GM12878 (cell line): ENCODE measurements at regions of chr3 and their contacts with region 1.

Region 1: DNA sequence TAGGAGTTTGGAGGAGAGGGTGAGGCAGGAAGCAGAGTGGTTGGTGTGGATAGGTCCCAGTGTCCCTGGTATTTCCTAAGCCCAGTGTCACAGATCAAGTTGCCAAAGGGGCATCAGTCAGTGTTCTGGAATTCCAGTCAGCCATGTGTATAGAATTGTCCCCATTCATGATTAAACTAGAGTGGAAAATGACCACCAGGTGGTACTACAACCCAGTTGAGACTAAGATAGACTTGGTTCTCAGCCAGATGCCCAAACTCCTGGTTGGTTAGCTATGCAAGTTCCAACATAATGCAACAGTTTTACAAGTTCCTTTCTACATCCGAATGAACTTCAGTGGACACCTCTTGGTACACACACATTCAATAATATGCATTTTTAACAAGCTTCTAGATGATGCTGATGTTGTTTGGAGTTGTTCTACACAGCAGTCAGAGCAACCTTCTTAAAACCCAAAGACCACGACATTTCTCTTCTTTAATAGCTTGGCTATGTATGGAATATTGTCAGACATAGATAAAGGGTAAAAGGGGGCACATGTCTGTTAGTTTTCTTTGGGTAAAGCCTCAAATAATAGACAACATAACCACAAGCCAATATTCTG is 8.4 kb upstream of the ATR start:
- DNase-seq: no peak
- ATAC-seq: peak; percentile 88
- H3K4me3 ChIP-seq: no peak overlapping the region
- H3K27ac ChIP-seq: no peak overlapping the region
- H3K4me1 ChIP-seq: no peaks in the 10 kb centered on the region
- H3K27me3 ChIP-seq: no peaks in the 10 kb centered on the region
- CTCF ChIP-seq: peak; percentile 49 to 68 (median 50); a peak in 4 of 6 replicates
- EP300 ChIP-seq: no peak
- POLR2A ChIP-seq: no peak
- RAD21 ChIP-seq: peak; percentile 59

Region 2: DNA sequence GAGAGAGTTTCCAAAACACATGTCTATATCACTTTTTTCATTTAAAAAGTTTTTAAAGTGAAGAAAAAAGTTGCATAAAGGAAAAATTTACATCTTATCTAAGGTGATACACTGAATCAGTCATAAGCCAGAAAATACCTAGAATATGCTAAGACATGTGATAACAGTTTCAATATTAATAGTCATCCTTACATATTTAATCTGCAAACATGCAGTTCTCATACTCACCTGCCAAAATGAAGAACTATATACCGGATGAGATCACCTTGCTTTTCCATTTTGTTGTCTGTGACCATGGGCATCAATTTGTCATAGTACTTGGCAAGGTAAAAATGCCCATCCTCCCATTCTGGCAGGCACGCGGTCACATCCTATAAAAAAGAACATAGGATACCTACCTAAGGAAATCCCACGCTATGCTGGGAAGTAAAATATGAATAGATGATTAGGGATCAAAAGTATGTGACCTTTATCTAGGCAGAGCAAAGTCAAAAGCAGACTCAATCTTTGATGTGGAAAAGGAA is 101.9 kb before region 1 on chr3:
- CTCF ChIA-PET with region 1: no interaction called
- POLR2A ChIA-PET with region 1: no interaction called
- RAD21 ChIA-PET with region 1: no interaction called
- SMC1A ChIA-PET with region 1: no interaction called
- in situ Hi-C with region 1: no loop called
- intact Hi-C with region 1: no loop called
- DNase-seq: no peak
- ATAC-seq: no peak
- H3K4me3 ChIP-seq: no peak overlapping the region
- H3K27ac ChIP-seq: no peak overlapping the region
- H3K4me1 ChIP-seq: no peaks in the 10 kb centered on the region
- H3K27me3 ChIP-seq: no peaks in the 10 kb centered on the region
- CTCF ChIP-seq: no peak
- EP300 ChIP-seq: no peak
- POLR2A ChIP-seq: no peak
- RAD21 ChIP-seq: no peak

Region 3: DNA sequence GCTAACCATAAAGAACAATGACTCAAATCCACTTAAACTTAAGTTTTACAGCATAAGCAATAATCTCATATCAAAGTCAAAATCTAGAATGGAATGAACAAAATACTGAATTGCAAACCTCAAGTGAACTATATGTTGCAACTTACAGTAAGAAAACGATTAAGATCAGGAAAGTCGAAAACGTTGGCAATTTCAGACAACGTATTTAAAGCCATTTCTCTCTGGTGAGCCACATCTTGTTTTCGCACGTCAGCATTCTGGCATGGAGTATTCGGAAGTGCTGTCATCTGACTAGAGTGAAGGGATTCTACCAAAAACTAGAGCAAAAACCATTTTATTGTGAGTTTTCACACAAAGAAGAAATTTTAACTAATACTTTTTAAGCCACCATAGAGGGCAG is 36.9 kb before region 1 on chr3:
- CTCF ChIA-PET with region 1: no interaction called
- POLR2A ChIA-PET with region 1: no interaction called
- RAD21 ChIA-PET with region 1: no interaction called
- SMC1A ChIA-PET with region 1: no interaction called
- in situ Hi-C with region 1: no loop called
- intact Hi-C with region 1: no loop called
- DNase-seq: no peak
- ATAC-seq: no peak
- H3K4me3 ChIP-seq: no peak overlapping the region
- H3K27ac ChIP-seq: no peak overlapping the region
- H3K4me1 ChIP-seq: no peaks in the 10 kb centered on the region
- H3K27me3 ChIP-seq: no peaks in the 10 kb centered on the region
- CTCF ChIP-seq: no peak
- EP300 ChIP-seq: no peak
- POLR2A ChIP-seq: no peak
- RAD21 ChIP-seq: no peak

Region 4: DNA sequence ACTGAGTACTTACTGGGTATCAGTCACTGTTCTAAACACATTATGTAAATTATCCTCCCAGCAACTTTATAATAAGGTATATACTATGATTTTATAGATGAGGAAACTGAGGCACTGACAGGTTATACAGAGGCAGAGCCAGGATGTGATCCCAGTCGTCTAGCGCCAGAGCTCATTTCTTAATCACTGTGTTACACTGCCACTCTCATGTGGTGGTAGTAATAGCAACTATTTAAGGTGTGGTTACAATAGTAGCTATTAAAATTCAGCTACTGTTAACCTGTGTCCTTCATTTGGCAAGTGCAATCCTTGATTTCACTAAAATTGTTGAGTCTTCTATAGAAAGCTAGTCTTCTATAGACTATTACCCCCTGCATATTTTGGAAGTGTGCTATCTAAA is 93.8 kb after region 1 on chr3:
- CTCF ChIA-PET with region 1: no interaction called
- POLR2A ChIA-PET with region 1: no interaction called
- RAD21 ChIA-PET with region 1: interaction called, 3 read pairs
- SMC1A ChIA-PET with region 1: interaction called, 5 read pairs
- in situ Hi-C with region 1: no loop called
- intact Hi-C with region 1: loop called (anchors 5 kb)
- DNase-seq: no peak
- ATAC-seq: no peak
- H3K4me3 ChIP-seq: no peak overlapping the region
- H3K27ac ChIP-seq: no peak overlapping the region
- H3K4me1 ChIP-seq: no peaks in the 10 kb centered on the region
- H3K27me3 ChIP-seq: no peaks in the 10 kb centered on the region
- CTCF ChIP-seq: no peak; a peak in 1 of 6 replicates
- EP300 ChIP-seq: no peak
- POLR2A ChIP-seq: no peak
- RAD21 ChIP-seq: no peak

Region 5: DNA sequence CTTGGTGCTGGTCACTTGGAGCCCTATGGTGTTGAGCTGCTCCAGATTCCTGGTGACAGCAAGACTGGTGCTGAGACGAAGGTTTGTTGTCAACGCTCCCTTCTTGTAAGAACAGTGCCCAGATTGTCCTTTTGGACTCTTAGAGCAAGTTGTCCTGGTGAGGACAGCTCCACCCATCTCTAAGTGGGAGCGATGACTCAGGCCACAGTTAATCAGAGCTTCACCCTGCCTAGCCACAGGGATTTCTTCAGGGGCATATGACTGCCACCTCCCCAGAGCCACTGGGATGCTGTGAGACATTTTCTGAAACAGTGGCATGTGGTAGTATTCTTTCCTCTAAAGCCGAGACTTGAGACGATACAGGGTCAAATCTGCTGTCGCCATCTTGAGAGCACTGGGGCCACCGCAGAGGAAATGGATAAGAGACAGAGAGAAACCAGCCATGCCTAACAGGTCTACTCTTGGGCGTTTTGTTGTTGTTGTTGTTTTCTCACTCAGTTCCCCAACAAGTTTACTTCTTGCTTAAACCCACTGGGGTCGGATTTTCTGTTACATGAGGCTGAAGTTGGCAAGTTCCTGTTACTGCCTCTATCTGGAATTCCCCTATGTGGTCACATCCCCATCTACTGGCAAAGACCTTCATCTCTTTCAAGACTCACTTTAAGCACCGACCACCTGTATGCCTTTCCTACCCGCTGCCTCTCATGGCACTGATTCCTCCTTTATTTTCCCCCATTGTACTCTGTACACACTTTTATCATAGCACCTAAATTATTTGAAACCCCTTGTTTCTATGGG is 317.9 kb after region 1 on chr3:
- CTCF ChIA-PET with region 1: no interaction called
- POLR2A ChIA-PET with region 1: no interaction called
- RAD21 ChIA-PET with region 1: no interaction called
- SMC1A ChIA-PET with region 1: interaction called, 3 read pairs
- in situ Hi-C with region 1: no loop called
- intact Hi-C with region 1: loop called (anchors 10 kb)
- DNase-seq: no peak
- ATAC-seq: peak; percentile 79
- H3K4me3 ChIP-seq: no peak overlapping the region
- H3K27ac ChIP-seq: no peak overlapping the region
- H3K4me1 ChIP-seq: peaks cover 6% of the 10 kb centered on the region
- H3K27me3 ChIP-seq: no peaks in the 10 kb centered on the region
- CTCF ChIP-seq: peak in 1 of 3 experiments; percentile 10; a peak in 1 of 6 replicates
- EP300 ChIP-seq: no peak
- POLR2A ChIP-seq: no peak
- RAD21 ChIP-seq: 0 out of 2 replicates have a peak, but pooled peaks have one; percentile 27

Region 6: GRCh38 chr3:142993958-142994442 is 407.1 kb after region 1 on chr3:
- CTCF ChIA-PET with region 1: interaction called, 4 read pairs
- POLR2A ChIA-PET with region 1: interaction called, 3 read pairs
- RAD21 ChIA-PET with region 1: no interaction called
- SMC1A ChIA-PET with region 1: interaction called, 3 read pairs
- in situ Hi-C with region 1: loop called (anchors 5 kb)
- intact Hi-C with region 1: loop called (anchors 2 kb)
- DNase-seq: no peak
- ATAC-seq: peak; percentile 81
- H3K4me3 ChIP-seq: no peak overlapping the region
- H3K27ac ChIP-seq: no peak overlapping the region
- H3K4me1 ChIP-seq: 0 out of 2 replicates have a peak, but pooled peaks cover 3% of the 10 kb centered on the region
- H3K27me3 ChIP-seq: no peaks in the 10 kb centered on the region
- CTCF ChIP-seq: peak; percentile 68 to 83 (median 75)
- EP300 ChIP-seq: no peak
- POLR2A ChIP-seq: no peak
- RAD21 ChIP-seq: peak; percentile 83